GM18951 (cell line): ENCODE measurements at regions of chr9 and their contacts with region 1.

Region 1: DNA sequence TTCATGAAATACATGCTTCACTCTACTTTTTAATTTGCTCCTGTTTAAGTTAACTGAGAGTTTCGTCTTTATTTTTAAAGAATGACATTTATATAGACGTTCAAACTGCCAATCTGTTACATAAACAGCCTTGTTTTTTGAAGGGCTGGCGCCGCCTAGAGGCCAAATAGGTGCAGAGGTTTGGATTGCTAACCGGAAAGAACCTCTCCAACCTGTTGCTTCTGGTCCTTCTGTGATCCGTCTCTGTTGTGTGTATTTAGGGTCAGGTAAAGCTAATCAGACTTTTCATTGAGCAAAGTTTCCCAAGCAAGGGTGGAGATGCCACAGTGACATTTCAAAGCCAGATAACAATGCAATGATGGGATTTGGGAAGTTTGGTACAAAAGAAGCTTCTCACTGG is 39.5 kb upstream of the GLIS3 start:
- POLR2A ChIP-seq: no peak

Region 2: DNA sequence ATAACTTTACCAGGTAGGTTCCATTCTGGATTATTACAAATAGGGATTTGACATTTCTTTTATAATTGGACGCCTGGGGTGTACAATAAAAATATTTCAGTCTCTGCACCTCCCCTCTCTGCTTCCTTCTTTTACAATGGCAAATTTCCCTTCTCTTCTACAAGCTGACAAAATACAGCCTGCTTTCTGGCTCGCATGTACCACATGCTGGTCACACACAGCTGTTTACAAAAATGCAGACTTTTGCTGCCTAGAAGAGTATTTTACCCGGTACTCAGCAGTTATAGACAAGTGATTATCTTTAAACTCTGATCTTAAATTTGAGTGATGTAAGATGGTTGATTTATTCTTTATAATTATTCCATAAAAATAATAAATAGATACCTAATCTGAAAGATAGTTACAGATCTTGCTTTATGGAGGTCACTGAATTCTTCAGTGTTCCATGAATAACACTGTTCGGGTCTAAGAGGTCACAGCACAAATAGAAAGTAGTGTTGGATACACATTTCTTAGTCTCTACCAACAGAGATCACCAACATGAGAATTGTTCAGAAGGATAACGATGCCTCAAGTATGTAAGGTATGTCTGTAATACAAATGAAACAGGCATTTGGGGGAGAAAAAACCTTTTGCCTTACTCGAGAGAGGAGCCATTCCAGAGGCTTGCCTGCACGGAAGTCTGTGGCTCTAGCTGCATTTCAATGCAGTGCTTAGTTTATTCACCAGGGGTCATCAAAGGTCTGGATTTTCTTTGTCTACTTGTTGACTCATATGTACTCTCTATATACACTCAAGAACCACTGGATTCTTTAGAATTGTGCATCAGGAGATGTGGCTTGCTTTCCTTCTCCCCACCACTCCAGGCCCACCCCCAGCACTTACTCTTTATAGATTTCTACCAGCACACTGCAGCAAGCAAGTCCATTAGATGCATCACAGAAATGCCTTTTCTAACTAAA is 607.0 kb before region 1 on chr9:
- in situ Hi-C with region 1: loop called (anchors 25 kb)
- POLR2A ChIP-seq: no peak

Region 3: GRCh38 chr9:3962971-3963642 is 376.2 kb before region 1 on chr9:
- in situ Hi-C with region 1: loop called (anchors 25 kb)
- POLR2A ChIP-seq: no peak

Region 4: DNA sequence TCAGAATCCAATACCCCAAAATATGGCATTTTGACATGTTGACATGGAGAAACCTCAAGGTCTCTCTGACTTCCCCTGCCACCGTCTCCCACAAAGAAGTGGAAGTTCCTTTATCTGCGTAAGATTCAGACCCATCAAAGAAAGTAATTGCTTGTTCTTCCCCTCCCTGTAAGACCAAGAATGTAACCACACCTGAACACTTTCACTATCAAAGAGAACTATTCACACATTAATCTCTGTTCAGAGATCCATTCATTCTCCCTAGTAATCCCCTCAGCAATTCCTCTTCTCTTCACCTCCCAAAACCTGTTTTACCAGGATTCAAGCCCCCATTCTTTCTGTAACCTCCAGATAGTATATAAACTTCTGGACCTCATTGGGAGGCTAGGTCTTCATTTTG is 146.8 kb after region 1 on chr9:
- in situ Hi-C with region 1: no loop called
- POLR2A ChIP-seq: no peak